ENCODE measurements at regions of chr6 and their contacts with region 1.

Region 1: GRCh38 chr6:62523630-62524029 is 237.6 kb upstream of the KHDRBS2 start:
- DNase-seq: no peak
- ATAC-seq: no peak
- H3K4me3 ChIP-seq: no peak overlapping the region
- H3K27ac ChIP-seq: no peak overlapping the region
- H3K4me1 ChIP-seq: no peaks in the 10 kb centered on the region
- H3K27me3 ChIP-seq: no peaks in the 10 kb centered on the region
- CTCF ChIP-seq: no peak
- EP300 ChIP-seq: no peak
- POLR2A ChIP-seq: no peak
- RAD21 ChIP-seq: no peak

Region 2: GRCh38 chr6:63154535-63154934 is 630.9 kb after region 1 on chr6:
- CTCF ChIA-PET with region 1: no interaction called
- POLR2A ChIA-PET with region 1: no interaction called
- in situ Hi-C with region 1: no loop called
- intact Hi-C with region 1: loop called (anchors 5 kb)
- DNase-seq: no peak
- ATAC-seq: no peak
- H3K4me3 ChIP-seq: no peak overlapping the region
- H3K27ac ChIP-seq: no peak overlapping the region
- H3K4me1 ChIP-seq: no peaks in the 10 kb centered on the region
- H3K27me3 ChIP-seq: no peaks in the 10 kb centered on the region
- CTCF ChIP-seq: no peak
- EP300 ChIP-seq: no peak
- POLR2A ChIP-seq: no peak
- RAD21 ChIP-seq: no peak

Region 3: DNA sequence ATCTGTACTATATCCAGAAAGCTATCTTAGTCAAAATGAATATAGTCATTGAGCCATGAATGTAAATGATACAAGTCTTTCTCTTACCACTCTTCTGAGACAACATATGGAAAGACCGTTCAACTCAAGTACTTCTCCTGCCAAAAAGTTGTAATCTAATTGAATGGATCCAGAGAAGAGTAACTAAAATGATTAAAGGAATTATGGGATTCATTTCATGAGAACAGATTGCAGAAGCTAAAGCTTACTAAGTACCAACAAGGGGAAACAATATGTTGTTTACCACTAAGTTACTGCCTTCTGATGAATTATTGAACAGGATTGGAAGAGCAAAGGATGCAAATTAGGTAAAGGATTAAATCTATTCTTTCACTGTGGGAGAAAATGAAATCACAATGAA is 798.2 kb after region 1 on chr6:
- CTCF ChIA-PET with region 1: no interaction called
- POLR2A ChIA-PET with region 1: no interaction called
- in situ Hi-C with region 1: no loop called
- intact Hi-C with region 1: no loop called
- DNase-seq: no peak
- ATAC-seq: no peak
- H3K4me3 ChIP-seq: no peak overlapping the region
- H3K27ac ChIP-seq: no peak overlapping the region
- H3K4me1 ChIP-seq: no peaks in the 10 kb centered on the region
- H3K27me3 ChIP-seq: no peaks in the 10 kb centered on the region
- CTCF ChIP-seq: no peak
- EP300 ChIP-seq: no peak
- POLR2A ChIP-seq: no peak
- RAD21 ChIP-seq: no peak

Measured in HepG2 (cell line).